ENCODE measurements at regions of chr7 and their contacts with region 1.

Region 1: GRCh38 chr7:23273141-23273599 is 26.0 kb upstream of the MALSU1 start:
- DNase-seq: peak; percentile 79 to 96 (median 87)
- ATAC-seq: peak; percentile 97
- H3K4me3 ChIP-seq: peak overlapping the region; percentile 15
- H3K4me3 Mint-ChIP-seq: peak overlapping the region; percentile 26
- H3K27ac ChIP-seq: no peak overlapping the region
- H3K27ac Mint-ChIP-seq: no peak overlapping the region
- H3K4me1 ChIP-seq: peaks cover 8% of the 10 kb centered on the region
- H3K4me1 Mint-ChIP-seq: peaks cover 9% of the 10 kb centered on the region
- H3K27me3 ChIP-seq: no peaks in the 10 kb centered on the region
- H3K27me3 Mint-ChIP-seq: peaks cover 4% of the 10 kb centered on the region
- CTCF ChIP-seq: peak; percentile 90

Region 2: GRCh38 chr7:23181684-23182553 is 91.3 kb before region 1 on chr7 and contains the start of gene NUP42:
- CTCF ChIA-PET with region 1: no interaction called
- POLR2A ChIA-PET with region 1: no interaction called
- intact Hi-C with region 1: loop called in 1 of 2 experiments (anchors 10 kb)
- DNase-seq: peak; percentile 87 to 98 (median 92)
- ATAC-seq: peak; percentile 91
- H3K4me3 ChIP-seq: peak within 1 kb of the TSS; percentile 88
- H3K4me3 Mint-ChIP-seq: peak within 1 kb of the TSS; percentile 96
- H3K27ac ChIP-seq: peak within 1 kb of the TSS; percentile 71 to 81
- H3K27ac Mint-ChIP-seq: peak within 1 kb of the TSS; percentile 97
- H3K4me1 ChIP-seq: peaks cover 18% of the 10 kb centered on the region
- H3K4me1 Mint-ChIP-seq: peaks cover 29% of the 10 kb centered on the region
- H3K27me3 ChIP-seq: no peaks in the 10 kb centered on the region
- H3K27me3 Mint-ChIP-seq: no peaks in the 10 kb centered on the region
- CTCF ChIP-seq: no peak
- total RNA-seq, gene NUP42: 19.4 to 20.1 TPM

Region 3: DNA sequence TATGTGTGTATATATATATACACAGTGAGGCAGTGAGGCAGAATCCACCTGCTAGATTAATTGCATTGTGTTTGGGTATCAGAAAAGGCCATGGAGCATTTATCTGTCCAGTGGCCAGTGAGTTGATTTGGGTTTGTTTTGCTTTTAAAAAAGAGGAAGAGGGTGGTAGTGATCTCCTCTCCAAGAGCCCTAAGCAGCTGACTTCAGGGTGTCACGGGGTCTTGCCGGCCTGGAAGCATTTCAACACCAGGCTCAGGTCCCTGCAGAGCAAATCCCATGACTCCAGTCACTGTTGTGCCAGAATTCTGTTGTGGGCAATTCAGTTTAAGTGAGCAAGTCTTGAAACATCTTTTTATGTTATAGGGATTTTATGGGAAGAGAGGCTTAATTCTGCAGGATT is 57.1 kb before region 1 on chr7:
- CTCF ChIA-PET with region 1: no interaction called
- POLR2A ChIA-PET with region 1: no interaction called
- intact Hi-C with region 1: no loop called
- DNase-seq: peak in 3 of 14 experiments; percentile 3 to 57 (median 45)
- ATAC-seq: no peak
- H3K4me3 ChIP-seq: no peak overlapping the region
- H3K4me3 Mint-ChIP-seq: no peak overlapping the region
- H3K27ac ChIP-seq: no peak overlapping the region
- H3K27ac Mint-ChIP-seq: no peak overlapping the region
- H3K4me1 ChIP-seq: no peaks in the 10 kb centered on the region
- H3K4me1 Mint-ChIP-seq: no peaks in the 10 kb centered on the region
- H3K27me3 ChIP-seq: peaks cover 0 to 4% of the 10 kb centered on the region in 2 experiments
- H3K27me3 Mint-ChIP-seq: peaks cover 21% of the 10 kb centered on the region
- CTCF ChIP-seq: no peak

Region 4: GRCh38 chr7:23357190-23358093 is 84.3 kb after region 1 on chr7:
- CTCF ChIA-PET with region 1: interaction called, 3 read pairs
- POLR2A ChIA-PET with region 1: no interaction called
- intact Hi-C with region 1: loop called (anchors 5 to 10 kb)
- DNase-seq: peak in 3 of 14 experiments; percentile 25 to 41 (median 39)
- ATAC-seq: peak; percentile 43
- H3K4me3 ChIP-seq: no peak overlapping the region
- H3K4me3 Mint-ChIP-seq: no peak overlapping the region
- H3K27ac ChIP-seq: no peak overlapping the region
- H3K27ac Mint-ChIP-seq: no peak overlapping the region
- H3K4me1 ChIP-seq: no peaks in the 10 kb centered on the region
- H3K4me1 Mint-ChIP-seq: peaks cover 15% of the 10 kb centered on the region
- H3K27me3 ChIP-seq: no peaks in the 10 kb centered on the region
- H3K27me3 Mint-ChIP-seq: peaks cover 12% of the 10 kb centered on the region
- CTCF ChIP-seq: peak; percentile 33

Region 5: GRCh38 chr7:23531794-23532489 is 258.8 kb after region 1 on chr7 and contains the start of gene TRA2A:
- CTCF ChIA-PET with region 1: interaction called, 4 read pairs
- POLR2A ChIA-PET with region 1: no interaction called
- intact Hi-C with region 1: loop called in 1 of 2 experiments (anchors 5 kb)
- DNase-seq: peak; percentile 92 to 99 (median 97)
- ATAC-seq: peak; percentile 91
- H3K4me3 ChIP-seq: peak within 1 kb of the TSS; percentile 97
- H3K4me3 Mint-ChIP-seq: peak within 1 kb of the TSS; percentile 94
- H3K27ac ChIP-seq: peak within 1 kb of the TSS; percentile 95 to 98
- H3K27ac Mint-ChIP-seq: peak within 1 kb of the TSS; percentile 97
- H3K4me1 ChIP-seq: peaks cover 29% of the 10 kb centered on the region
- H3K4me1 Mint-ChIP-seq: peaks cover 49% of the 10 kb centered on the region
- H3K27me3 ChIP-seq: no peaks in the 10 kb centered on the region
- H3K27me3 Mint-ChIP-seq: no peaks in the 10 kb centered on the region
- CTCF ChIP-seq: no peak
- total RNA-seq, gene TRA2A: 246 to 275 TPM

Region 6: GRCh38 chr7:24665564-24666294 is 1392.6 kb after region 1 on chr7:
- CTCF ChIA-PET with region 1: no interaction called
- POLR2A ChIA-PET with region 1: no interaction called
- intact Hi-C with region 1: loop called in 1 of 2 experiments (anchors 10 kb)
- DNase-seq: peak in 12 of 14 experiments; percentile 3 to 69 (median 18)
- ATAC-seq: peak; percentile 39
- H3K4me3 ChIP-seq: no peak overlapping the region
- H3K4me3 Mint-ChIP-seq: no peak overlapping the region
- H3K27ac ChIP-seq: no peak overlapping the region
- H3K27ac Mint-ChIP-seq: no peak overlapping the region
- H3K4me1 ChIP-seq: no peaks in the 10 kb centered on the region
- H3K4me1 Mint-ChIP-seq: no peaks in the 10 kb centered on the region
- H3K27me3 ChIP-seq: no peaks in the 10 kb centered on the region
- H3K27me3 Mint-ChIP-seq: no peaks in the 10 kb centered on the region
- CTCF ChIP-seq: peak; percentile 86